PC-3 (cell line): ENCODE measurements at regions of chr10 and their contacts with region 1.

Region 1: DNA sequence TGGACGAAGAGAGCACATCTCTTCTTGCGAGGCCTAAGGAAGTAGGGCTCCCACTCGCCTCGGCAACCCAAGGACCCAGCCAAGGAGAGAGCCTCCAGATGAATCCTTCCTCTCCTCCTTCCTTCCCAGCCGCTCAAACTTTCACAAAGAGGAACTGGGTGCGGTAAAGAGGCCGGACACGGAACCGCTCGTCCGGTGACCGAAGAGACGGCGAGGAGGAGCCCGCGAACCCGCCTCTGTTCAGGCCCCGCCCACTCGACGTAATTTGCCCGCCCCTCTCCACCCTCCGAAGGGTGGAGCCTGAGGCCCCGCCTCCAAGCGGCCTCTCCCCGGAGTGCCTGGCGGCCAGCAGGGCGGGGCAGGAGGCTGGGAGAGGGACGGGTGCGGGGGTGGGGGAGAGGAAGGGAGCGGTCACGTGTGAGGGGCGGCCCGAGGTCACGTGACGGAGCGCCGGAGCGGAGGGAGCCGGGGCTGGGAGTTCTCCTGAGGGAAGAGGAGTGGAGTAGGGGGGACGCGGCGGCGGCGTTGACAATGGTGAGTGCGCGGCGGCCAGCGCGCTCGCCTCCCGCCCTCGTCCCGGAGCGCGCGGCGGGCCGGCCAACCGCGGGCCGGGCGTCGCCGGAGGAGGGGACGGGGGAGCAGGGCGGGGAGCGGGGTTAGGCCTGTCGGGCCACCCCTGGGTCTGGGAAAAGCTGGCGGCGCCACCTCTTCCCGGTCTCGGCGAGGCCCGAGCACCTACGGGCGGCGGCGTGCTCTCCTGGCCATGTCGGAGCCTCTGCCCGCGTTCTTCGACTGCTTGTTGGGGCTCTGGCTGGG is at the start of gene VPS26A:
- DNase-seq: peak; percentile 100
- ATAC-seq: peak; percentile 82
- H3K4me3 ChIP-seq: peak within 1 kb of the TSS; percentile 93
- H3K27ac ChIP-seq: peak within 1 kb of the TSS; percentile 56
- H3K4me1 ChIP-seq: peaks cover 23% of the 10 kb centered on the region
- H3K27me3 ChIP-seq: no peaks in the 10 kb centered on the region
- CTCF ChIP-seq: no peak
- total RNA-seq, gene VPS26A: 44.7 and 60.0 TPM in 2 replicates

Region 2: GRCh38 chr10:68957654-68958053 is 166.3 kb before region 1 on chr10:
- CTCF ChIA-PET with region 1: no interaction called
- POLR2A ChIA-PET with region 1: no interaction called
- intact Hi-C with region 1: loop called (anchors 1 kb)
- DNase-seq: peak; percentile 33
- ATAC-seq: no peak
- H3K4me3 ChIP-seq: peak overlapping the region; percentile 77
- H3K27ac ChIP-seq: 0 out of 2 replicates have a peak overlapping the region, but pooled peaks have one; percentile 75
- H3K4me1 ChIP-seq: peaks cover 9% of the 10 kb centered on the region
- H3K27me3 ChIP-seq: no peaks in the 10 kb centered on the region
- CTCF ChIP-seq: no peak

Region 3: DNA sequence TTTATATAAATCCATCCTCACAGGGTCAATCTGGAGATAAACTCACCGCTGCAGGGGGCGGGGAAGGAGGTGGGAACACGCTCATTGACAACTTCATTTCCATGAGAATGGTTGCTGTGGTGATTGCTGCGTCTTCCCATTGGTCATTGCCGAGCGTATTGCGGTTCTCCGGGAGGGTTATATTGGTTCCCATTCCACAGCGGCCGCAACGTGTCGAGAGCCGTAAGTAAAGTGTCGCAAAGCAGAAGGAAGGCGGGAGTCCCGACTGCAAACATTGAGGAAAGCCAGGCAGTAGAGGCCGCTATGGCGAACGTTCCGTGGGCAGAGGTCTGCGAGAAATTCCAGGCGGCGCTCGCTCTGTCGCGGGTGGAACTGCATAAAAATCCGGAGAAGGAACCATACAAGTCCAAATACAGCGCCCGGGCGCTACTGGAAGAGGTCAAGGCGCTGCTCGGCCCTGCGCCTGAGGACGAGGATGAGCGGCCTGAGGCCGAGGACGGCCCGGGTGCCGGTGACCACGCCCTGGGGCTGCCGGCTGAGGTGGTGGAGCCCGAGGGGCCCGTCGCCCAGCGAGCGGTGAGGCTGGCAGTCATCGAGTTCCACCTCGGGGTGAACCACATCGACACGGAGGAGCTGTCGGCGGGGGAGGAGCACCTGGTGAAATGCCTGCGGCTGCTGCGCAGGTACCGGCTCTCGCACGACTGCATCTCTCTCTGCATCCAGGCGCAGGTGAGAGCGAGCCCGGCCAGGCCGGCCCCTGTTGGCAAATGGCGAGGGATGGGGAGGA is 135.2 kb before region 1 on chr10 and contains the start of gene KIFBP:
- CTCF ChIA-PET with region 1: no interaction called
- POLR2A ChIA-PET with region 1: no interaction called
- intact Hi-C with region 1: loop called (anchors 1 kb)
- DNase-seq: peak; percentile 99
- ATAC-seq: peak; percentile 85
- H3K4me3 ChIP-seq: peak within 1 kb of the TSS; percentile 80
- H3K27ac ChIP-seq: peak within 1 kb of the TSS; percentile 51
- H3K4me1 ChIP-seq: peaks cover 37% of the 10 kb centered on the region
- H3K27me3 ChIP-seq: no peaks in the 10 kb centered on the region
- CTCF ChIP-seq: peak; percentile 73
- total RNA-seq, gene KIFBP: 65.9 and 72.9 TPM in 2 replicates

Region 4: DNA sequence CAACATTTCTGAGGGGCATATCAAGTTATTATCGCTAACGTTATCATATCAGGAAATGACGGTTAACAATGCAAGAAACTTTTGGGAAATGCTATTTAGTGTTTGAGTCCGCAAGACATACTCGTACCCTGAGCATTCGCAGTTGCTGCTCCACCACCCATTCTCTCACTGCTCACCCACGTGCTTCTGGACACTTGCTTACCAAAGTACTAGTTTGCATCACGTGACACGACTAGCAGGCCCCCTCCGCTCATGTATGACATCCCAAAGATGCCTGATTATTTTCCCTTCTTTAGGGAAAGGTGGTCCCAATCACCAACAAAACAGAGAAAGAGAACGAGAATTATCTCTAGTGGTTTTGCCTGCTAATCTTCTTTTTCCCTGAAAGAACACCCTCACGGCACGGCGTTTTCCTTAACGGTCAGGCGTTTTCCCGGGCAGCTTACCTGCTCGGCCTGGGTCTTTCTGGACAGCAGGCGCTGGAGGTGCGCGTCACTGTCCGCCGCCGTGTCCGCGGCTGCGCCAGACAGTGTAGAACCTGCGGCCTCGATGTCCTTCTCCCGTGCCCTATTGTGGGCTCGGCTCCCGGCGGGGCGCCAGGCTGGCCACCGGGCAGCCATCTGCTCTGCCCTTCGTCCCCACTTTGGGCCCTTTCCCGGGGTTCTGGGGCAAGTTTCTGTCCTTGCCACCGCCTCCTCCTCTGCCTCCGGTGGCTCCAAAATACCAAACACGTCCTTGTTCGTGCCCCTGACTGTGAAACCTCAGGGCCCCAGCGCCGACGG is 56.0 kb after region 1 on chr10 and contains the start of gene SUPV3L1:
- CTCF ChIA-PET with region 1: no interaction called
- POLR2A ChIA-PET with region 1: no interaction called
- intact Hi-C with region 1: loop called (anchors 2 kb)
- DNase-seq: peak; percentile 99
- ATAC-seq: peak; percentile 88
- H3K4me3 ChIP-seq: peak within 1 kb of the TSS; percentile 83
- H3K27ac ChIP-seq: peak within 1 kb of the TSS; percentile 75
- H3K4me1 ChIP-seq: peaks cover 23% of the 10 kb centered on the region
- H3K27me3 ChIP-seq: no peaks in the 10 kb centered on the region
- CTCF ChIP-seq: no peak
- total RNA-seq, gene SUPV3L1: 86.2 and 117 TPM in 2 replicates

Region 5: GRCh38 chr10:69383558-69383957 is 259.6 kb after region 1 on chr10:
- CTCF ChIA-PET with region 1: no interaction called
- POLR2A ChIA-PET with region 1: no interaction called
- intact Hi-C with region 1: no loop called
- DNase-seq: no peak
- ATAC-seq: no peak
- H3K4me3 ChIP-seq: no peak overlapping the region
- H3K27ac ChIP-seq: no peak overlapping the region
- H3K4me1 ChIP-seq: peaks cover 25% of the 10 kb centered on the region
- H3K27me3 ChIP-seq: no peaks in the 10 kb centered on the region
- CTCF ChIP-seq: peak; percentile 22; the same call in 1 of the 2 replicates